ENCODE measurements at regions of chr20 and their contacts with region 1.

Region 1: DNA sequence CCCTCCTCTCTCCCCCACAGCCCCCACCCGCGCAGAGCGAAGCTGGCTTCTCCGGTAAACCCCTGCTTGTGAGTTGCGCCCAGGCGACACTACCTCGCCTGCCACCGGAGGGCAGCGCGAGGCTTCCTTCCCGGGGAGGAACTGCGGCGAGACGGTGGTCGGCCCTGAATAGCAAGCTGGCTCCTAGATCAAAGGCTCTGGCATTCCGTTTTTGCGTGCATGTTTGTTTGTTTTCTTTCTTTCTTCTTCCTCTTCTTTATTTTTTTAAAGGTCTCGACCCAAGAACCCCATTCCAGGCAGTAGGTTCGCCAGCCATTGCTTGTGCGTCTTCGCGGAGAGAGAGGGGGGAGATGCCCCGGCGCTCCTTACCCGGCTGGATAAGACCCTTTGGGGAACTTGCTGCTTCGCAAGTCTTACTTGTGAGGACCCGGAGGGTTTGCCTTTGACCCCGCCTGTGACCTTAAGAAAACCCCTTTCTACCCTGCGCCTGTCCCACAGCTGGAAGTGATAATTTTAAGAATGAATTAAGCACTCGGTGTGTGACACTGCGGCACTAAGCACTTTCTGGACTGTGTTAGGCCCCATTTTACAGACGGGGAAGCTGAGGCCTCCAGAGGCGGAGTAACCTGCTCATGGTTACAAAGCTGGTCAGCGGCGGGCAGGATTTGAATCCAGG is 92.7 kb upstream of the SIRPA start:
- DNase-seq: peak; percentile 70
- ATAC-seq: peak; percentile 62
- H3K4me3 ChIP-seq: peak overlapping the region; percentile 62
- H3K27ac ChIP-seq: no peak overlapping the region
- H3K4me1 ChIP-seq: peaks cover 29% of the 10 kb centered on the region
- H3K27me3 ChIP-seq: no peaks in the 10 kb centered on the region
- CTCF ChIP-seq: peak; percentile 96

Region 2: DNA sequence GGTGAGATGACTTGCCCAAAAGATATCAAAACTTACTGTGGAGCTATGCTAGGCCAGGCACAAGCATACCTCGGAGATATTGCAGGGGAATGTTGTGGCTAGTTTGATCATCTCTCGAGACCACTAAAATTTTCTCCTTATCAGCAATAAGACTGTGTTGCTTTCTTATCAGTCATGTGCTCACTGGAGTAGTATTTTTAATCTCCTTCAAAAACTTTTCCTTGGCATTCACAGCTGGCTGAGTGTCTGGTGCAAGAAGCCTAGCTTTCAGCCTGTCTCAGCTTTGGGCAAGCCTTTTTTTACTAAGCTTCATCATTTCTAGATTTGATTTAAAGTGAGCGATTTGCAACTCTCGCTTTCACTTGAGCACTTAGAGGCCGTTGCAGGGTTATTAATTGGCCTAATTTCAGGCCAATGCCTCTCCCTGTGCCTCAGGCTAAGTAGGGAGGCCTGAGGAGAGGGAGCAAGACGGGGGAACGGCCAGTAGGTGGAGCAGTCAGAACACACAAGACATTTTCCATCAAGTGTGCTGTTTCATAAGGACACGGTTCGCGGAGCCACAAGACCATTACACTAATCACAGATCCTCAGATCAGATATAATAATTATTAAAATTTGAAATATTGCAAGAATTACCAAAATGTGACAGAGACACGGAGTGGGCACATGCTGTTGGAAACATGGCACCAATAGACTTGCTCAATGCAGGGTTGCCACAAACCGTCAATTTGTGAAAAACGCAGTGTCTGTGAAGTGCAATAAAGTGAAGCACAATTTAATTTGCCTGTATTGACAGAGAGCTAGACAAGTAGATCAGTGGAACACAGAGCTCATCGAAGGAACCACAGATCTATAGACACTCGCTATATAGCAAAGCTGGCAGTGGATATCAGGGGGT is 38.1 kb before region 1 on chr20:
- CTCF ChIA-PET with region 1: interaction called, 3 read pairs
- POLR2A ChIA-PET with region 1: no interaction called
- intact Hi-C with region 1: loop called (anchors 1 kb)
- DNase-seq: peak; percentile 84
- ATAC-seq: peak; percentile 86
- H3K4me3 ChIP-seq: no peak overlapping the region
- H3K27ac ChIP-seq: peak overlapping the region; percentile 13; the same call in 1 of the 2 replicates
- H3K4me1 ChIP-seq: peaks cover 31% of the 10 kb centered on the region
- H3K27me3 ChIP-seq: no peaks in the 10 kb centered on the region
- CTCF ChIP-seq: peak; percentile 95

Region 3: DNA sequence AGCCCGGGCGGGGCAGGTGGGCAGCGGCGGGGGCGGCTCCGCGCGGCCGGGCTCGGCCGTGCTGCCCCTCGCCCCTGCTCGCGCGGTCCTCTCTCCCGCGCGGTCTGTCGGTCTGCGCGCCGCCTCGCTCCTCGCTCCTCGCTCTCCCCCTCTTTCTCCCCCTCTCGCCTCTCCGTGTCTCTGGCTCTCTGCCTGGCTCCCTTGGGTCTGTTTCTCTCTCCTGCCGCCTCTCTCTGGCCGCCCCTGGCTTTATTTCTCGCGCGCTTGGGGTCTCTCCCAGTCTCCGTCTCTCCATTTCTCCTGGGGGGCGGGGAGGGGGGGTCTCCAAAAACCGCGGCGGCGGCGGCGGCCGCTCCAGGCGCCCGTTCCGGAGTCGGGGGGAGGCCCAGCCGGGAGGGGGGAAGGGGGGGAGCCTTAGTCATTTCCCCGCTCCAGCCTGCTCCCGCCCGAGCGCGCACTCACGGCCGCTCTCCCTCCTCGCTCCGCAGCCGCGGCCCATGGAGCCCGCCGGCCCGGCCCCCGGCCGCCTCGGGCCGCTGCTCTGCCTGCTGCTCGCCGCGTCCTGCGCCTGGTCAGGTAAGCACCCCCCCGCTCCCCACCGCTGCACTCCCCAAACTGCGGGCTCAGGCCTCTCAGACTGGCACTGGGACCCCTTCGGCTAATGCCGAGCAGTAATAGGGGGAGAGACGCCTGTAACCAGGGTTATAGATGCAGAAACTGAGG is 92.6 kb after region 1 on chr20 and contains the start of gene SIRPA:
- CTCF ChIA-PET with region 1: interaction called, 14 read pairs
- POLR2A ChIA-PET with region 1: no interaction called
- intact Hi-C with region 1: loop called (anchors 5 kb)
- DNase-seq: peak; percentile 66
- ATAC-seq: peak; percentile 63
- H3K4me3 ChIP-seq: peak within 1 kb of the TSS; percentile 79
- H3K27ac ChIP-seq: no peak within 1 kb of the TSS
- H3K4me1 ChIP-seq: peaks cover 7% of the 10 kb centered on the region; the same call in 1 of the 2 replicates
- H3K27me3 ChIP-seq: no peaks in the 10 kb centered on the region
- CTCF ChIP-seq: no peak
- total RNA-seq, gene SIRPA: 12.8 and 17.3 TPM in 2 replicates

Region 4: DNA sequence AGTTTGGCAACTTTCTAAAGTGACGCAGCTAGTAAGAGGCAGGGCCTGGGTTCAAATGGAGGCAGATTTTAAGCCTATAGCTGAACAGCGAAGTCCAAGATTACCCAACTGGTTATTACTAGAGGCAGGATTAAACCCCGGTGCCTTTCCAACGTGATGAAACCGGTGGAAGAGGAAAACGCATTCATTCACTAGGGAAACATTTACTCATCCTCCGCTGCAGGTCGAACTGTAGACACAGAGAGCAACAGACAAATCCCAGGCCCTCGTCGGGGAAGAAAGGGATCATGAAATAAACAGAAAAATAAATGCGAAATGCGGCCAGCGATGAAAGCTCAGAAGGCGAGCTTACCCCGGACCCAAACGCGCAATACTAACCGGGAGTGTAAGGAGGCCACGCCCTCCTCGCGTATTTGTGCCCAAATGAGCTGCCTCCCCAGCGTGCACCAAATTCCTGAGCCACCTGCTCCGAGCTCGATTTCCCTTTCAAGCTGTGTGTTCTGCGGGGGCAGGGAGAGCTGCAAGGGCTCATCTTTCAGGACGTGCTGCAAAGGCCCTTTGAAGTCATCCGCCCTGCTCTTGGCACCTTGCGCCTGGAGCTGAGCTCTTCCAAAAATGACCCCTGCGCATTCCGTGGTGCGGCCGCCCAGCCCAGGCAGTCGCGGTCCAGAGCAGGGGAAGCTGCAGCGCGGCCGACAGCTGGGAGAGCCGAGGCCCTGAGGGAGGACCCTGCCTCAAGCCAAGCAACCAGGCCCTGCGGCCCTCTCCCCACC is 144.4 kb after region 1 on chr20:
- CTCF ChIA-PET with region 1: no interaction called
- POLR2A ChIA-PET with region 1: no interaction called
- intact Hi-C with region 1: loop called (anchors 10 kb)
- DNase-seq: no peak
- ATAC-seq: peak; percentile 45
- H3K4me3 ChIP-seq: peak overlapping the region; percentile 48
- H3K27ac ChIP-seq: no peak overlapping the region
- H3K4me1 ChIP-seq: peaks cover 6% of the 10 kb centered on the region; the same call in 1 of the 2 replicates
- H3K27me3 ChIP-seq: peaks cover 35% of the 10 kb centered on the region
- CTCF ChIP-seq: no peak

Measured in PC-3 (cell line).